ENCODE measurements at regions of chr15 and their contacts with region 1.

Region 1: GRCh38 chr15:90387537-90388461 is at the start of gene IQGAP1:
- DNase-seq: peak; percentile 96 to 97
- H3K4me3 ChIP-seq: peak within 1 kb of the TSS; percentile 94
- H3K4me3 Mint-ChIP-seq: peak within 1 kb of the TSS; percentile 79
- H3K27ac Mint-ChIP-seq: peak within 1 kb of the TSS; percentile 77
- H3K4me1 ChIP-seq: peaks cover 32% of the 10 kb centered on the region
- H3K4me1 Mint-ChIP-seq: peaks cover 36% of the 10 kb centered on the region
- H3K27me3 ChIP-seq: no peaks in the 10 kb centered on the region
- H3K27me3 Mint-ChIP-seq: no peaks in the 10 kb centered on the region
- CTCF ChIP-seq: no peak
- total RNA-seq, gene IQGAP1: 142 and 150 TPM in 2 replicates

Region 2: GRCh38 chr15:90320061-90320884 is 67.5 kb before region 1 on chr15:
- CTCF ChIA-PET with region 1: interaction called, 13 read pairs
- POLR2A ChIA-PET with region 1: interaction called, 11 read pairs
- intact Hi-C with region 1: loop called (anchors 2 kb)
- DNase-seq: peak; percentile 86
- H3K4me3 ChIP-seq: peak overlapping the region; percentile 26
- H3K4me3 Mint-ChIP-seq: peak overlapping the region; percentile 61
- H3K27ac Mint-ChIP-seq: peak overlapping the region; percentile 60
- H3K4me1 ChIP-seq: peaks cover 17% of the 10 kb centered on the region
- H3K4me1 Mint-ChIP-seq: peaks cover 18% of the 10 kb centered on the region
- H3K27me3 ChIP-seq: no peaks in the 10 kb centered on the region
- H3K27me3 Mint-ChIP-seq: no peaks in the 10 kb centered on the region
- CTCF ChIP-seq: peak; percentile 96 to 97

Region 3: DNA sequence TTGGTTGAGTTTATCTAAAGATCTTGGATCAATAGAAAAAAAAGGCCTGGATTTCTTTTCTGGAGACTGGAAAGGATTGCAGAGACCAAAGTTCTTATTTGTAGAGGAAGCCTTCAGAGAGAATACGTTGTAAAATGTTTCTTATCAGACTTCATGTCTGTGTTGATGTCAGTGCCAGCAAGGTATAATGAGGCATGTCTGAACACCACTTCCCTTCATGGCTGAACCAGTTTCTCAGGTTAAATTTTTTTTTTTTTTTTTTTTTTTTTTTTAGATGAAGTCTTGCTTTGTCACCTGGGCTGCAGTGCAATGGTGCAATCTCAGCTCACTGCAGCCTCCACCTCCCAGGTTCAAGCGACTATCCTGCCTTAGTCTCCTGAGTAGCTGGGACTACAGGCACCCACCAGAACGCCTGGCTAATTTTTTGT is 53.5 kb before region 1 on chr15:
- CTCF ChIA-PET with region 1: no interaction called
- POLR2A ChIA-PET with region 1: interaction called, 9 read pairs
- intact Hi-C with region 1: loop called (anchors 2 kb)
- DNase-seq: peak; percentile 80 to 82
- H3K4me3 ChIP-seq: no peak overlapping the region
- H3K4me3 Mint-ChIP-seq: peak overlapping the region; percentile 59
- H3K27ac Mint-ChIP-seq: peak overlapping the region; percentile 83
- H3K4me1 ChIP-seq: peaks cover 48% of the 10 kb centered on the region
- H3K4me1 Mint-ChIP-seq: peaks cover 24% of the 10 kb centered on the region
- H3K27me3 ChIP-seq: no peaks in the 10 kb centered on the region
- H3K27me3 Mint-ChIP-seq: no peaks in the 10 kb centered on the region
- CTCF ChIP-seq: no peak

Region 4: GRCh38 chr15:90352109-90352893 is 35.5 kb before region 1 on chr15 and contains the start of gene ZNF774:
- CTCF ChIA-PET with region 1: no interaction called
- POLR2A ChIA-PET with region 1: interaction called, 18 read pairs
- intact Hi-C with region 1: no loop called
- DNase-seq: peak; percentile 95 to 97
- H3K4me3 ChIP-seq: peak within 1 kb of the TSS; percentile 64
- H3K4me3 Mint-ChIP-seq: peak within 1 kb of the TSS; percentile 91
- H3K27ac Mint-ChIP-seq: peak within 1 kb of the TSS; percentile 85
- H3K4me1 ChIP-seq: peaks cover 4% of the 10 kb centered on the region; the same call in 1 of the 2 replicates
- H3K4me1 Mint-ChIP-seq: no peaks in the 10 kb centered on the region
- H3K27me3 ChIP-seq: no peaks in the 10 kb centered on the region
- H3K27me3 Mint-ChIP-seq: no peaks in the 10 kb centered on the region
- CTCF ChIP-seq: no peak
- total RNA-seq, gene ZNF774: 9.4 and 11.9 TPM in 2 replicates

Region 5: DNA sequence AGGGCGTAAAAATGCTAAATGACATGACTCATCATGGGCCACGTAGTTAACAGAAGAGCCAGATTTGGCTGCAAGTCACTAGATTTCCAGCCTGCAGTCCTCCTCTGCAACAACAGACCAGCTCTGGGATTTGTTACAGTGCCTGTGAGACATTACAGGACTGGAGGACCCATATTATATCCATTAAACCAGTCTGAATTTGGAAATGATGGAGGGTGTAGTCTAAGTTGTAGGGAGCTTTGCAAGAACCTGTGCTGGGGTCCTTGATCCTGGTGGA is 24.9 kb before region 1 on chr15:
- CTCF ChIA-PET with region 1: interaction called, 7 read pairs
- POLR2A ChIA-PET with region 1: interaction called, 17 read pairs
- intact Hi-C with region 1: loop called (anchors 1 kb)
- DNase-seq: no peak
- H3K4me3 ChIP-seq: no peak overlapping the region
- H3K4me3 Mint-ChIP-seq: no peak overlapping the region
- H3K27ac Mint-ChIP-seq: no peak overlapping the region
- H3K4me1 ChIP-seq: peaks cover 34% of the 10 kb centered on the region
- H3K4me1 Mint-ChIP-seq: peaks cover 20% of the 10 kb centered on the region
- H3K27me3 ChIP-seq: no peaks in the 10 kb centered on the region
- H3K27me3 Mint-ChIP-seq: no peaks in the 10 kb centered on the region
- CTCF ChIP-seq: no peak

Region 6: DNA sequence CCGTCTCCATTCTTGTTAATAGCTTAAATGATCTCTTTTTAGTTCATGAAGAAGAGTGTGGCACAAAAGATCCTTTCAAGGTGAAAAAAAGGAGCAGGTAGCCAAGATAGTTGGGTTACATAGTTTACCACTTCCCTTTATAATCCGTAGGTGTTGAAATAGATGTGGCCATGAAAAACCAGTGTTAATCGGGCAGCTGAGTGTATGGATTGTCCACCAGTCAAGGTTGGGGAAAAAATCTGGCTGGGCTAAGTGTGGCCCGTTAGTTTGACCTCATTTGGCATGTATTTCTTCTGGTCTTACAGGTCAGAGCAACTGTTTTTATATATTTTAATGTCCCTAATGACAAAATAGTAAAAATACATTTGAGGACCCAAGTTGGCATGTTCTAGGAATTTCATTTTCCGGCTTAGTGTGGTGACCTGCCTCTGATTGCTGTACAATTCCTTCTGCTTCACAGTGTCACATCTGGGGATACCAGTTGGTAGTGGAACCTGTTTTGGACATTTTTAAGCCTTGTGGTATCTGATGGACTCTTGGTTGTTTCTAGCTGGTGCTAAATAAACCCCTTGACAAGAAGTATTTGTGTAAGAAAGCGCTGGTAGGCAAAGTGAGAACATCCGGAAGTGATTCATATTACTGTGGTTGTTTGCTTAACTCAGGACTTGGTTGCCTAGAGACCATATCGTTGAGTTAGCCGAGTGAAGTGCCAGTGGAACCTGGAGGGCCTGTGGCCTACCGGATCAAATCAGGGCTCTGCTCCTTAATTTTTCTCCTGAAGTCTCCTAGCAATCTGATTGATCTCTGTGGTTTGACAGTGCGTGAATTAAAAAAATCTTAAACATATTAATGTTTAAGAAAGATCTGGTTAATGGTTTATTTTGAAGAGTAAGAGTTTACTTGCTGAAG is 12.9 kb after region 1 on chr15:
- CTCF ChIA-PET with region 1: interaction called, 12 read pairs
- POLR2A ChIA-PET with region 1: interaction called, 19 read pairs
- intact Hi-C with region 1: loop called (anchors 2 kb)
- DNase-seq: peak; percentile 80 to 84
- H3K4me3 ChIP-seq: no peak overlapping the region
- H3K4me3 Mint-ChIP-seq: peak overlapping the region; percentile 33
- H3K27ac Mint-ChIP-seq: peak overlapping the region; percentile 96
- H3K4me1 ChIP-seq: peaks cover 41% of the 10 kb centered on the region
- H3K4me1 Mint-ChIP-seq: peaks cover 34% of the 10 kb centered on the region
- H3K27me3 ChIP-seq: no peaks in the 10 kb centered on the region
- H3K27me3 Mint-ChIP-seq: no peaks in the 10 kb centered on the region
- CTCF ChIP-seq: no peak

Region 7: DNA sequence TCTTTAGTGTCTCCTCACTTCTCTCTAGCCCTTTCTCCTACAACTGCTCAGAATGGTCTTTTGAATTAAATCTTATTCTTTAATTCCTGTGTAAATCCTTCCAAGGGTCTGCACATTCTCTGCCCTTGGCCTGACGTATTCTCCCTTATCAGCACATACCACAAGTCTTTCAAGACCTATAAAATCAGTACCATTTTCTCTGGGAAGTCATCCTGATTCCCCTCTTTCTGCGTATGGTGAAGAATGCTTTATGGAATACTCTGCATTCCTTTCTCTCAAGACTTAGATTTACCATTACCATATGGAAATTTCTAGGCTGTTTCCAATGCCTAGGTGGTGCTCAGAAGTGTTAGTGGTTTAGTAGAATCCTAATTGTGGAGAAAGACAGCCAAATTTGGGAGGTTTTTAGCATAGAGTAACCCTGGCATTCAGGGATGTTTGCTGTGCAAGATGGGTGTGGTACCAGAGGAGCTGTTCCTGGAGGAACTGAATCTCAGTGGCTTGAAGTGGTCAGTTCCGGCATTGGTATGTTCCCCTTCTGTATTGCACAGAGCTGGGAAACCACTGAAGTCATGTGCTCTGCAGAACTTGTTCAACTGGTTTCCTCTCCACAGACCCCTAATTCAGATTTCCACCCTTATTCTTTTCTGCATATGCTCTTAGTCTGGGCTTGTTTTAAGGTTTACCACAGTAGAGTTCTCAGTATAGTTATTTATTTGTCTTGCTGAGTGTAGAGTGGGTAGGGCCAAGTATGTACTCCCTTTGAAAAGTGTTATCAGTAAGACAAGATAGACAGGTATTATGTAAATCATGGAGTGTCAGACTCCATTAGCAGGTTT is 24.8 kb after region 1 on chr15:
- CTCF ChIA-PET with region 1: interaction called, 3 read pairs
- POLR2A ChIA-PET with region 1: interaction called, 16 read pairs
- intact Hi-C with region 1: loop called (anchors 1 kb)
- DNase-seq: peak; percentile 77 to 85
- H3K4me3 ChIP-seq: no peak overlapping the region
- H3K4me3 Mint-ChIP-seq: peak overlapping the region; percentile 59
- H3K27ac Mint-ChIP-seq: peak overlapping the region; percentile 88
- H3K4me1 ChIP-seq: peaks cover 50% of the 10 kb centered on the region
- H3K4me1 Mint-ChIP-seq: peaks cover 57% of the 10 kb centered on the region
- H3K27me3 ChIP-seq: no peaks in the 10 kb centered on the region
- H3K27me3 Mint-ChIP-seq: no peaks in the 10 kb centered on the region
- CTCF ChIP-seq: no peak